ENCODE measurements at regions of chr10 and their contacts with region 1.

Region 1: DNA sequence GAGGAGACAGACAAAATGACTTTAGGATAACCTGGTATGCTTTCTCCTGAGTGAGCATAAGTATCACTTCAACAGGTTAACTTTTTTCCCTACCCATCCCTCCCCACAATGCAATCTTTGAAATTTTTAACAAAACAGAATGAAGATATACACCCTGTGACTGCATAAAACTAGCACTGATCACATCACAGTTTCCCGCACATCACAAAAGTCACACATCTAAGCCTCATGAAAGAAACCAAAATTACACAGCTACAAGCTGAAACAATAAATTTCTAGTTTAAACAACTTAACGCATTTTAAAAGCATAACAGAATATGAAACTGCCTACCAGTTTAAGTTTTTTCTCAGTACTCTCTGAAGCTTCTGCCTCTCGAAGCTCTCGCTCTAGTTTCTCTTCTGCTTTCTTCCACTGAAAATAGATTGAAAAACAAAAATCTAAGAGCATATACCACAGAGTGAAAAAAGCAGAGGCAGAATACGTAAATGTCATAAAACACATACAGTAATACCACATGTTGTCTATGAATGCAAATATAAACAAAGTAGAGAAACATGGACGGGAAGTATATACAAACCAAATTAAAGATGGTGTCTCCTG is 18.1 kb downstream of the NOC3L start:
- DNase-seq: no peak

Region 2: DNA sequence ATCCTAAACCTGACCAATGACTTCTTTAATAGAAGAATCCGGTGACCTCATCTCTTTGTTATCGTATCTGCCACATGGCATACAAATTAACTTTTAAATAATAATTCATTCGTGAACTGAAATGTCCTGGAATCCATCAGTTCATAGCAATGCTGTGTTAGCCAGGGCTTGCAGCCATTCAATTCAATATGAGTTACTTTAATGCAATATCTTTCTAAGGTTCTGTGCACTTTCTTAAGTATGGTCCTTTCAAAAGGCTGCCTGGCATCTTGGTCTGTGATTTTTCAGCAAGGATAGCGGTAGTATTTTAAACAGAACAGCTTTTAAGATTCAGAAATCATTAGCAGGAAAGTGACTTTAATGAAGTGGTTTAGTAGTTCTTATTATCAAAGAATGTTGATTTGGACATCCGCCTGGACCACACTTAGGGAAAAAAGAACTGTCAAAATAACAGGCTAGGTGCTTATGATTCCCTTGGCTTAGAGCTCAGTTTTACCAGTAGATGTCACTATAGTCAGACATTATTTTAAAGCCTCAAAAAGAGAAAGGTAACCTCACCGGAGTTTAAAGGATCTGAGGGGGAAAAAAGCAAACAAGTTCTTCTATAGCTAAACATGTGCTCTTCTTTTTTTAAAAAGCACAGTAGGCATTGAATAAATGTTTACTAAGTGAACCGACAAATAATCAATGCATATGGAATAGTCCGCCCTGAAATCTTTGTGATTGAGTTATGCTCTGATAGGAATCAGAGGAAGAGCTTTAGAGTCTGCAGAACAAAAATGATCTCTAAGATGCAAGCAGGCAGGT is 428.2 kb before region 1 on chr10:
- in situ Hi-C with region 1: loop called (anchors 25 kb)
- DNase-seq: peak; percentile 53

Region 3: GRCh38 chr10:94549257-94549656 is 204.6 kb after region 1 on chr10:
- in situ Hi-C with region 1: no loop called
- DNase-seq: peak; percentile 30

Measured in SK-MEL-5 (cell line).